ENCODE measurements at regions of chr13 and their contacts with region 1.

Region 1: DNA sequence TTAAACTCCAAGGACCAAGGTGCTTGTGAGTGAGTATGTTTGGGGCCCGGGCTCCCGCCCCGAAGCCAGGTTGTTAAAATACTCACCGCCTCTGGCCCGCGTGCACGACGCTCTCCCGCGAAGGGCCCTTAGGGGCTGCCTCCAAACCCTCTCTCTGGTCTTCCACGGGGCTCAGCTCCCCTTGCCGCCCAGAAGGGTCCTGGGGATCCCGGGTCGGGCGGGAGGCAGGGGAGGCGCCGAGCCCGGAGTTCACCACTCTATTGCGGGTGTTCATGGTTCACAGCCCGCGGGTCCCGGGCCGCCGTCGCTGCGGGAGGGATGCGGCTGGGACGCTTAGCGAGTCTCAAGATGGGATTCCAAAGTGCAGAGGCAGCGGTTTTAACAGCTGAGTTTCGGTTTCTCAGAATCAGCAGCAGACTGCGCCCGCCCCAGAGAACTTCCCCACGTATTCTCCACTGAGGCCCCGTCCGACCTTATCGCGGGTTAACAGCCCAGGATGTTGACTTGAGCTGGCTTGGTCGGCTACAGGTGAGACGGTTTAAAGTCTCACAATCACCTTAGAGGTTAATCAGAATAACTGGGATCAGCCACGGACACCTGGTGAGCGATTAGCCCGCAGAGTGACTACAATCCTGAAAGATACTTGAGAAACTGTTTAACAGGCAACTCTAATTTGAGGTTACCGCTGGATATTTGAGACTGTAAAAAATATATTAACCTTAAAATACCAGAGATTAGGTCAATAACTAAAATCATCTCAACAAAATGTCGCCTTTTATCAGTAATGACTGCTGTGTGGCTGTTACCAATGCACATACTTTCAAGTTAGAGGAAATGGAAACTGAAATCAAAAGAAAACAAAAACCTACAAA is at the start of gene EPSTI1:
- DNase-seq: no peak
- H3K4me3 Mint-ChIP-seq: no peak within 1 kb of the TSS
- H3K27ac Mint-ChIP-seq: peak within 1 kb of the TSS; percentile 50
- H3K4me1 Mint-ChIP-seq: peaks cover 16% of the 10 kb centered on the region
- H3K27me3 Mint-ChIP-seq: no peaks in the 10 kb centered on the region
- CTCF ChIP-seq: no peak
- total RNA-seq, gene EPSTI1: not detected in 2 replicates

Region 2: DNA sequence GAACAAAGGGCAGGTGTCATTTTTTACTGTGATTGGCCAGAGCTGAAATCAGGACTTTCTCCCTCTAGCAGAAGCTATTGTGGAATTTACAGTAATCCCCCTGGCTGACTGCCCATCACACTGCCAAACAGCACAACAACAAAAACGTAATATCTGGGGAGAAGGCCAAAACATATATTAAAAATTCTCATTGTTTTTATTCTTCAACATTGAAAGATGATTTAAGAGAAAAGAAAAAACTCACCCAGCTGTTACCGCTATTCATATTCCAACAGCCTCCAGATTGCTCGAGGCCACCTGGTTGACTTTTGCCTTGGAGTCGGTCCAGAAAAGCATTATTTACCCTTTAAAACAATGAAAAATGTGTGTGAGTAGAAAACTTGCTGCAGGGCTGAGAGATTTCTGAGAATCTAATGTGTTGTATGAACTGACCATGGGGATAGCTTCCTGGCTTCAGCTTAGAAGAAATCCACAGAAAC is 97.3 kb before region 1 on chr13:
- CTCF ChIA-PET with region 1: no interaction called
- POLR2A ChIA-PET with region 1: interaction called, 4 read pairs
- intact Hi-C with region 1: loop called (anchors 10 kb)
- DNase-seq: peak; percentile 92
- H3K4me3 Mint-ChIP-seq: no peak overlapping the region
- H3K27ac Mint-ChIP-seq: peak overlapping the region; percentile 29
- H3K4me1 Mint-ChIP-seq: peaks cover 9% of the 10 kb centered on the region
- H3K27me3 Mint-ChIP-seq: no peaks in the 10 kb centered on the region
- CTCF ChIP-seq: no peak

Region 3: GRCh38 chr13:43005460-43006236 is 13.5 kb after region 1 on chr13:
- CTCF ChIA-PET with region 1: no interaction called
- POLR2A ChIA-PET with region 1: interaction called, 11 read pairs
- intact Hi-C with region 1: loop called (anchors 1 kb)
- DNase-seq: peak; percentile 52
- H3K4me3 Mint-ChIP-seq: peak overlapping the region; percentile 36
- H3K27ac Mint-ChIP-seq: peak overlapping the region; percentile 88
- H3K4me1 Mint-ChIP-seq: peaks cover 43% of the 10 kb centered on the region
- H3K27me3 Mint-ChIP-seq: no peaks in the 10 kb centered on the region
- CTCF ChIP-seq: no peak

Region 4: GRCh38 chr13:43054803-43055802 is 63.0 kb after region 1 on chr13:
- CTCF ChIA-PET with region 1: interaction called, 6 read pairs
- POLR2A ChIA-PET with region 1: interaction called, 7 read pairs
- intact Hi-C with region 1: loop called (anchors 2 kb)
- DNase-seq: peak; percentile 45
- H3K4me3 Mint-ChIP-seq: no peak overlapping the region
- H3K27ac Mint-ChIP-seq: no peak overlapping the region
- H3K4me1 Mint-ChIP-seq: peaks cover 34% of the 10 kb centered on the region
- H3K27me3 Mint-ChIP-seq: no peaks in the 10 kb centered on the region
- CTCF ChIP-seq: no peak

Region 5: DNA sequence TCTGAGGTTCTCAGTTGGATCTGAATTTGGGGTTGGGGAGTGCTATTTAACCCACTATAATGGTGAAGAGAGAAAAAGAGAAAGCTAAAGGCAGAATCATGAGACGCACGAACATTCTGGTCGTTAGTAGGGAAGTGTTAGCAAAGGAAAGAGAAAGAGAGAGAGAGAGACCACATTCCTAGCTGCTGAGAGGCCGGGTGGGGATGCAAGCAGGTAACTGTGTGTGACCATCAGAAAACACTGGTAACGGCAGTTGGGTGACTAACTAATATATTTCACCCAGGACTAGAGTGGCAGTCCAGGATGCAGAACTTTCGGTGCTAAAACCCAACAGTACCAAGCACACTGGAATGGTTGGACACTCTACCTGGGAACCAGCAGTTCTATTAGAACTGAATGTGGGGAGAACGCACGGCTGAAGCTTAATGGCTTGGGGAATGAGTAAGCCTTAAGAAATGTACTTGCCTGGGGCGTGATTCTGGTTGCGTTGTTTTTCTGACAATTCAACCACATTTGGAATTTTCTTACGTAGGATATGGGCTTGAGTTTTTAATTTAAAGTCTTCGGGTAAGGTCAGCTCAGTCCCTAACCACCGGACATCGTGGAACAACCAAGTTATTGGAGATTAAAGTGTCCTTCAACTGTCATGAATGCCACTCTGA is 161.4 kb after region 1 on chr13:
- CTCF ChIA-PET with region 1: no interaction called
- POLR2A ChIA-PET with region 1: no interaction called
- intact Hi-C with region 1: no loop called
- DNase-seq: peak; percentile 93
- H3K4me3 Mint-ChIP-seq: peak overlapping the region; percentile 33
- H3K27ac Mint-ChIP-seq: peak overlapping the region; percentile 93
- H3K4me1 Mint-ChIP-seq: peaks cover 36% of the 10 kb centered on the region
- H3K27me3 Mint-ChIP-seq: no peaks in the 10 kb centered on the region
- CTCF ChIP-seq: no peak

Measured in MCF 10A (cell line).